ENCODE measurements at regions of chr7 and their contacts with region 1.

Region 1: GRCh38 chr7:8295638-8296361 is 33.8 kb upstream of the ICA1 start:
- DNase-seq: peak; percentile 8
- H3K4me3 Mint-ChIP-seq: no peak overlapping the region
- H3K27ac Mint-ChIP-seq: no peak overlapping the region
- H3K4me1 Mint-ChIP-seq: peaks cover 4% of the 10 kb centered on the region
- H3K27me3 Mint-ChIP-seq: peaks cover 13% of the 10 kb centered on the region

Region 2: DNA sequence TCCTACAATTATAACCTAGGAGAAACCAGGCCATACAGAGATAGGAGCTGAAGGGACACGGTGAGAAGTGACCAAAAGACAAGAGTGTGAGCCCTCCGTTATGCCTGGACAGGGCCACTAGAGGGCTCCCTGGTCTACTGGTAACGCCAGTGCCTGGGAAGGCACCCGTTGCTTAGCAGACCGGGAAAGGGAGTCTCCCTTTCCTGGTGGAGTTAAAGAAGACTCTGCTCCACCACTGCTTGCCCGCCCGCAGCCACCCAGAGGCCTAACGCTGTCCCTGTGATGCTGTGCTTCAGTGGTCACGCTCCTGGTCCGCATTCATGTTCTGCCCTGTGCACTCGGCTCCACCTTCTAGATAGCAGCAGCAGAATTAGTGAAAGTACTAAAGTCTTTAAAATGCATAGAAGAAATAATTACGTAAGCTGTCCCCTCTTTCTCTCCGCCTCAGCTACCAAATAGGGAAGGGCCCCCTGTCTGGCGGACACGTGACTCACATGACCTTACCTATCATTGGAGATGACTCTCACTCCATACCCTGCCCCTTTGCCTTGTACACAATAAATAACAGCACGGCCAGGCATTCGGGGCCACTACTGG is 1779.3 kb before region 1 on chr7:
- intact Hi-C with region 1: loop called (anchors 10 kb)
- DNase-seq: peak; percentile 49
- H3K4me3 Mint-ChIP-seq: peak overlapping the region; percentile 67
- H3K27ac Mint-ChIP-seq: no peak overlapping the region
- H3K4me1 Mint-ChIP-seq: peaks cover 7% of the 10 kb centered on the region
- H3K27me3 Mint-ChIP-seq: peaks cover 6% of the 10 kb centered on the region

Region 3: GRCh38 chr7:7103343-7104313 is 1192.2 kb before region 1 on chr7:
- intact Hi-C with region 1: loop called (anchors 1 kb)
- DNase-seq: no peak
- H3K4me3 Mint-ChIP-seq: no peak overlapping the region
- H3K27ac Mint-ChIP-seq: no peak overlapping the region
- H3K4me1 Mint-ChIP-seq: peaks cover 16% of the 10 kb centered on the region
- H3K27me3 Mint-ChIP-seq: no peaks in the 10 kb centered on the region

Region 4: DNA sequence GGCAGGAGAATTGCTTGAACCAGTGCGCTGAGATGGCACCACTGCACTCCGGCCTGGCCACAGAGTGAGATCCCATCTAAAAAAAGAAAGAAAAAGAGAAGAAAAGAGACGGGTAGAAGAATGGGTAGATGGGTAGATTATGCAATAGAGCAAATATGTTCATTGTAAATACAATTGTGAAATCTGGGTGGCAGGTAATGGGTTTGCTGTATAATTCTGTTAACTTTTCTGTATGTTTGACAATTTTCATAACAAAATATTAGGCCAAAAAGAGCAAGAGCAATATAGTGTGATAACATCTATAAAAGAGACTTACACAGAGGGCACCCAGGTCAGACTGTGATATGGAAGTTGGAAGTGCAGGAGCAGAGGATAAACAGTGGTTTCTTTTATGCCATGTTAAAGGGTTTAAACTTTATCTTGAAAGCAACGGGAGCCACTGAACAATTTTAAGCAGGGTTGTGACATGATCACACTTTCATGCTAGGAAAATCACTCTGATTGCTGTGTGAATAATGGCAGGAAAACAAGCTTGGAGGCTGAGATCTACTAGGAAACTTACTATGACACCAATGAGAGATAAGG is 753.5 kb before region 1 on chr7:
- intact Hi-C with region 1: loop called (anchors 5 kb)
- DNase-seq: no peak
- H3K4me3 Mint-ChIP-seq: no peak overlapping the region
- H3K27ac Mint-ChIP-seq: no peak overlapping the region
- H3K4me1 Mint-ChIP-seq: no peaks in the 10 kb centered on the region
- H3K27me3 Mint-ChIP-seq: peaks cover 8% of the 10 kb centered on the region

Region 5: GRCh38 chr7:7595451-7595850 is 700.3 kb before region 1 on chr7:
- intact Hi-C with region 1: loop called (anchors 1 kb)
- DNase-seq: no peak
- H3K4me3 Mint-ChIP-seq: no peak overlapping the region
- H3K27ac Mint-ChIP-seq: no peak overlapping the region
- H3K4me1 Mint-ChIP-seq: no peaks in the 10 kb centered on the region
- H3K27me3 Mint-ChIP-seq: no peaks in the 10 kb centered on the region